ENCODE measurements at regions of chr9 and their contacts with region 1.

Region 1: DNA sequence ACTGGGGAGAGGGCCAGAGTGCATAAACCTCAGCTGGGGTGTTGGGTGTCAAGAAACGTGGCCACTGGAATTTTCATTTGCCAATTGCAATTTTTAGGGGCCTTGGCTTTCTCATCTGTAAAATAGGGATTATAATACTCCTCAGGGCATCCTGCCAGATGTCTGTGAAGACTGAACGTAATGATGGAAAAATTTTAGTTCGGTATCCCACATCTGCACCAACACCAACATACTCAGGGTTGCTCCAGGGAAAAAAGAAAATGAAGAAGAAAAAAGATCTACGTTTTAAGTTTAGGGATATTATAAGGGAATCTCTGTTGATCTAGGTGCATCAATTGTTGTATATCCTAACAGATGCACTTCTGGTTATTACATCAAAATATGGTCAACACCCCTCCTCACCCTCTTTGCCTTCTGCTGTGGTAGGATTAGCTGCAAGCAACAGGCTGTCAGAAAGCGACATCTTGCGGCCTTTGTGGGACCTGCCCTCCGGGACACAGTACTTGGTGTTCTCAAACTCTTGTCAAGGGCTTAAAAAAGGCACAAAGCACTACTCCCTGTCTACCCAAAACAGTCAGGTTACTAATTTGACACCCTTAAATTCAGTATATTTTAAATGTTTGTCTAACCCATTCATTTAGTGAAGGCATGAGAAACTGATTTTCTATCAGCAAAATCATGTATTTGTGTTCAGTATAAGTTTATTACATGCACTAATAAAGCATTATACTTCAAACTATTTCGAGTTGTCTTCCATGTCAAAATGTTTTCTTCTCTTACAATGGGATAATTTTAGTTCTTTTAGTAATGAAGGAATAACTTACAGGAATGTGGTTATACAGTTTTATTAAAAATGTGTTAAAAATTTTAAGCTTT is 8.3 kb upstream of the TBC1D2 start:
- DNase-seq: peak; percentile 77 to 91 (median 87)
- ATAC-seq: peak; percentile 94
- H3K4me3 ChIP-seq: no peak overlapping the region
- H3K4me1 ChIP-seq: no peaks in the 10 kb centered on the region
- CTCF ChIP-seq: peak; percentile 86

Region 2: GRCh38 chr9:98045234-98046179 is 218.2 kb before region 1 on chr9:
- intact Hi-C with region 1: no loop called
- DNase-seq: no peak
- ATAC-seq: peak; percentile 76
- H3K4me3 ChIP-seq: no peak overlapping the region
- H3K4me1 ChIP-seq: no peaks in the 10 kb centered on the region
- CTCF ChIP-seq: no peak

Region 3: GRCh38 chr9:98207606-98208005 is 56.1 kb before region 1 on chr9:
- intact Hi-C with region 1: loop called (anchors 5 kb)
- DNase-seq: no peak
- ATAC-seq: no peak
- H3K4me3 ChIP-seq: no peak overlapping the region
- H3K4me1 ChIP-seq: peaks cover 7% of the 10 kb centered on the region
- CTCF ChIP-seq: no peak